ENCODE measurements at regions of chr1 and their contacts with region 1.

Region 1: GRCh38 chr1:163315773-163316374 is 5.9 kb upstream of the NUF2 start:
- DNase-seq: no peak
- ATAC-seq: no peak

Region 2: DNA sequence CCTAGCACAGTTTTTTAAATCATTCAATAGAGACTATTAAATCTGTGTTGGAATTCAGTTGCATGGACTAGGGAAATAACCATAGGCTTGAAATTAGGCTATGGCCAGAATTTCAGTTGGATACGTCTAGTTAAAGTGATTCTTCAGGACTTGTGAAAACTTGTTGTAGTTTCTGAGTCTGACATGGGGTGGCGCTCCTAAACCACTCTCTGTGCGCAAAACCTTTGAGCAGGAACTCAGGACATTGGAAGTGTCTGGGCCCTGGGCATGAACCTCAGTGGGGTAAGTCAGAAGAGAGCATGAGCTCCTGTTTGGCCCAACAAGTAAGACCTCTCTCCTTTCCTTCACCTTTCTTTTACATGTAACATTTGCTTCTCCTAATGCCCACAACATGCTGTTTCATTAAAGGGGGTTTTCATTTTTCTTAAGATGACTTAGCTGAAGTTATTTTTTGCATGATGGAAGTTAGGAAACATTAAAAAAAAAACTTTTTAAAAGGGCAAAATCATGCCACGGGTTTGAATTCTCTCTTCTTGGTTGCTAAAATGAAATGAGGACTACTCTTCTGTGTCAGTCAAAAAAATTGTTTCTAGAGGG is 437.8 kb before region 1 on chr1:
- intact Hi-C with region 1: loop called (anchors 5 kb)
- DNase-seq: no peak
- ATAC-seq: peak; percentile 70

Region 3: GRCh38 chr1:163046071-163046470 is 269.8 kb before region 1 on chr1:
- intact Hi-C with region 1: no loop called
- DNase-seq: no peak
- ATAC-seq: no peak

Region 4: DNA sequence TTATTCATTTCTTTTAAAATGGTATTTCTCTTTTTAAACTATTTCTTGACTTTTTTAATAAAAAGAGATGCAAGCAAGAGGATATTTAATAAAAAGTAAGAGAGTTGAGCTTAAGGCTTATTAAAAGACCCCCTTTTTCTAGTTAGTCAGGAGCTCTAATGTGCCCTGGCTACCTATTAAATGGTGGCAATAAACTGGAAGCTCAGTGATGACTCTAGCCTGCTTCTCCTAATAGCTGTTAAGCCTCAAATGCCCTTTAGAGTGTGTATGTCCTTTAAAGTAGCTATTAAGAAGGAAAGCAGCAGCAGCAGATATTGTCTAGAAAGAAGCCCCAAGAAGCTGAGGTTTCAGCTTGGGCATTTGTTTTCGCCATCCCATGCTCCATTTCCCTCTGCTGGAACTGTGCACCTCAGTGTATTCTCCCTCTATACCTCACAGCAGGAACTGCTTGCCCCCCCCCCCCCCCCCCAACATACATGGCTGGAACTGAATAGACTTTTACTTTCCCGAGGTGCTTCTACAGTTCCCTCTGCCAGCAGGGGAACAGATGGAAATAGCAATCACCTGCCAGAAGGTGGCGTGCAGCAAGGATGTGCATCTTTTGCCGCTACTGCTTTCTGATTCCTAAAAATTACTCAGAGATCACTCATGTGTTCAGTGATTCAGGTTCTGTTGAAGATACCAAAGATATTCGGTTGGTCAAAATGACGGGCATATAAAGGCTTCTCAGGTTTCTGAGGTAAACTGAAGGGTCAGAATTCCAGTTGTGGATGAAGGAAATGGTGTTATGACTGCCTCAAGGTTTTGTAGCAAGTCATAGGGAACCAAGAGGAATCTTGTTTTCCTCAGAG is 244.2 kb before region 1 on chr1:
- intact Hi-C with region 1: loop called (anchors 5 kb)
- DNase-seq: peak; percentile 68
- ATAC-seq: peak; percentile 61

Region 5: DNA sequence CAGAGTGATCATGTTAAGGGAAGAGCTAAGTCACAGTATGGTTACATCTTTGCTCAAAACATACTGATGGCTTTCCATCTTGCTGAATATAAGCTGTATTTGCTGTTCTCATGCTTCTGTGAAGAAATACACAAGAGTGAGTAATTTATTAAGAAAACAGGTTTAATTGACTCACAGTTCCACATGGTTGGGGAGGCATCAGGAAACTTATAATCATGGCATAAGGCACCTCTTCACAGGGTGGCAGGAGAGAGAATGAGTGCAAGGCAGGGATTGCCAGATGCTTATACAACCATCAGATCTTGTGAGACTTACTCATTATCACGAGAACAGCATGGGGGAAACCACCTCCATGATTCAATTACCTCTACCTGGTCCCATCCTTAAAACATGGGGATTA is 88.7 kb before region 1 on chr1:
- intact Hi-C with region 1: no loop called
- DNase-seq: no peak
- ATAC-seq: no peak

Region 6: DNA sequence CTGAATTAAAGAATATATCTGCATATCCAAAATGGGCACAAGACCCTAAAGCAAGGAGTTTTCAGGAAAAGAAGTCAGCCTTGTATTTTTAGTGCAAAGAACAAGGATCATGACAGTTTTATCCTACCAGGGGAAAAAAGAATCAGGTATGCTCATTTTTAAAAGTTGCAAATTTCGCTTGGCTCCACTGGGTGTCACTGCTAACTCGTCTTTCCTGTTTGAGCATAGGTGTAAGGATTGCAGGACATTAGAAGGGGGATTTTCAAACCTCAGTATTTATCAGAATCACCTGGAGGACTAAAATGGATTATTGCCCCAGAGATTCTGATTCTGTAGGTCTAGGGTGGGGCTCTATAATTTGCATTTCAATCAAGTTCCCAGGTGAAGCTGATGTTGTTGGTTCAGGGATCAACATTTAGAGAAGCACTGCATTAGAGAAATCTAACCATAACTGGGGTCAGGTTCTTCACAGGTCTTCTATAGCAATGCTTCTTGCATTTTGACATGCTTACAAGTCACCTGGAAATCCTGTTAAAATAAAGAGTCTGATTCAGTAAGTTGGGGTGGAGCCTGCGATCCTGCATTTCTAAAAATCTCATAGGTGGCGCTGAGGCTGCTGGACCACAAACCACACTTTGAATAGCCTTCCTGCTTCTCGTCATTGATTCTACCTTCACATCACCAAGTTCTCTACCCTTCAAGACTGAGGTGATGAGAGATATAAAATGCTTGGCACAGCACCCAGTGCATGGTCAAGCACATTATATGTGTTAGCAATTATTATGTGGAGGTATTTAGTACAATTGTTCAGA is 45.5 kb after region 1 on chr1:
- intact Hi-C with region 1: no loop called
- DNase-seq: no peak
- ATAC-seq: no peak